ENCODE measurements at regions of chr4 and their contacts with region 1.

Region 1: GRCh38 chr4:40193016-40193571 is 3.7 kb upstream of the RHOH start:
- DNase-seq: peak in 6 of 10 donors; percentile 51 to 79 (median 74)
- ATAC-seq: peak; percentile 24 to 26
- H3K4me3 Mint-ChIP-seq: peak overlapping the region; percentile 86 to 100 (median 98)
- H3K27ac Mint-ChIP-seq: peak overlapping the region; percentile 94 to 100 (median 99)
- H3K4me1 Mint-ChIP-seq: peaks cover 36 to 83% (median 76%) of the 10 kb centered on the region in 4 donors
- H3K27me3 Mint-ChIP-seq: peaks cover 0 to 1% (median 0%) of the 10 kb centered on the region in 5 donors

Region 2: GRCh38 chr4:39942507-39942906 is 250.6 kb before region 1 on chr4:
- POLR2A ChIA-PET with region 1: no interaction called
- DNase-seq: no peak
- ATAC-seq: no peak
- H3K4me3 Mint-ChIP-seq: no peak overlapping the region
- H3K27ac Mint-ChIP-seq: peak overlapping the region in 7 of 10 donors; percentile 7 to 46 (median 41)
- H3K4me1 Mint-ChIP-seq: peaks cover 15 to 70% (median 59%) of the 10 kb centered on the region in 4 donors
- H3K27me3 Mint-ChIP-seq: no peaks in the 10 kb centered on the region

Region 3: GRCh38 chr4:40149960-40150385 is 43.1 kb before region 1 on chr4:
- POLR2A ChIA-PET with region 1: interaction called, 29 read pairs
- DNase-seq: peak; percentile 33 to 87 (median 77)
- ATAC-seq: peak; percentile 85 to 90
- H3K4me3 Mint-ChIP-seq: peak overlapping the region in 6 of 10 donors; percentile 1 to 56 (median 31)
- H3K27ac Mint-ChIP-seq: peak overlapping the region; percentile 69 to 91 (median 88)
- H3K4me1 Mint-ChIP-seq: peaks cover 14 to 45% (median 38%) of the 10 kb centered on the region in 4 donors
- H3K27me3 Mint-ChIP-seq: no peaks in the 10 kb centered on the region

Region 4: GRCh38 chr4:40205259-40206198 is 12.4 kb after region 1 on chr4:
- POLR2A ChIA-PET with region 1: interaction called, 244 read pairs
- DNase-seq: no peak
- ATAC-seq: peak; percentile 29 to 42
- H3K4me3 Mint-ChIP-seq: peak overlapping the region; percentile 94 to 100 (median 98)
- H3K27ac Mint-ChIP-seq: peak overlapping the region; percentile 88 to 100 (median 95)
- H3K4me1 Mint-ChIP-seq: peaks cover 32 to 91% (median 69%) of the 10 kb centered on the region in 4 donors
- H3K27me3 Mint-ChIP-seq: no peaks in the 10 kb centered on the region

Region 5: GRCh38 chr4:40212674-40213527 is 19.8 kb after region 1 on chr4:
- POLR2A ChIA-PET with region 1: interaction called, 244 read pairs
- DNase-seq: no peak
- ATAC-seq: no peak
- H3K4me3 Mint-ChIP-seq: peak overlapping the region; percentile 55 to 100 (median 78)
- H3K27ac Mint-ChIP-seq: peak overlapping the region; percentile 87 to 98 (median 96)
- H3K4me1 Mint-ChIP-seq: peaks cover 51 to 99% (median 94%) of the 10 kb centered on the region in 4 donors
- H3K27me3 Mint-ChIP-seq: no peaks in the 10 kb centered on the region

Region 6: GRCh38 chr4:40247350-40247749 is 54.3 kb after region 1 on chr4:
- POLR2A ChIA-PET with region 1: interaction called, 79 read pairs
- DNase-seq: peak in 9 of 10 donors; percentile 52 to 86 (median 70)
- ATAC-seq: peak; percentile 69 to 86
- H3K4me3 Mint-ChIP-seq: peak overlapping the region in 9 of 10 donors; percentile 49 to 84 (median 76)
- H3K27ac Mint-ChIP-seq: peak overlapping the region; percentile 94 to 98 (median 96)
- H3K4me1 Mint-ChIP-seq: peaks cover 53 to 90% (median 82%) of the 10 kb centered on the region in 4 donors
- H3K27me3 Mint-ChIP-seq: no peaks in the 10 kb centered on the region

Region 7: DNA sequence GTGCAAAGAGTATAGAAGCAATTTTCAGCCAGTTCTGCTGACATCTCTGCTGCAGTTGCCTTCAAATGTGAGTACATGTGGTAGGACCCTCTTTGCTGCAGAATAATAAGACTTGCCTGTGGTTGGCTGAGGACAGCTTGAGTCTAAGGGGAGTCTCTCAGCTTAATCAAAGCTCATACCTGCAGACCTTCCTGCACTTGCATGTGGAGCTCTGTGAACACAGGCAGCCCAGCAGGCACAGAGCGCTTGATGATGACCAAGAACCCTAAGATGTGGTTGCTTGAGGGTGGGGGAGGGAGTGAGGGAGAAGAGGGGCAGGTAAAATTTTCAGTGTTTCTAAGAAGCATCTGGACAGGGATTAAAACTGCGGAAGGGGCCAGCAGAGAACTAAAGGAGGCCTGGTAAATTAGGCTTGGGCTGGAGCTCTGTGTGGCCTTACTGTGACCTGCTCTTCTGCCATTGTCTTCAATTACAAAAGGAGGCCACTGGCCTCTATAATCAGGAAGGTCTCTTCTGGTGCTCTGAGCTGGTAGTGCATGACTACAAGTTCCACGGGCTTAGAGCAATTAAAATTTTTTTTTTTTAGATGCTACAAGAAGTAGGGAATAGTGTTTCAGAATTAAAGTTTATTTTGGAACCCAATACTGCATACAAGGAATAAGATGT is 82.1 kb after region 1 on chr4:
- POLR2A ChIA-PET with region 1: interaction called, 12 read pairs
- DNase-seq: no peak
- ATAC-seq: peak; percentile 75 to 81
- H3K4me3 Mint-ChIP-seq: peak overlapping the region in 9 of 10 donors; percentile 28 to 79 (median 57)
- H3K27ac Mint-ChIP-seq: peak overlapping the region; percentile 39 to 91 (median 78)
- H3K4me1 Mint-ChIP-seq: peaks cover 26 to 52% (median 44%) of the 10 kb centered on the region in 4 donors
- H3K27me3 Mint-ChIP-seq: no peaks in the 10 kb centered on the region